CD4-positive, alpha-beta T cell (primary cell): ENCODE measurements at regions of chr4 and their contacts with region 1.

Region 1: DNA sequence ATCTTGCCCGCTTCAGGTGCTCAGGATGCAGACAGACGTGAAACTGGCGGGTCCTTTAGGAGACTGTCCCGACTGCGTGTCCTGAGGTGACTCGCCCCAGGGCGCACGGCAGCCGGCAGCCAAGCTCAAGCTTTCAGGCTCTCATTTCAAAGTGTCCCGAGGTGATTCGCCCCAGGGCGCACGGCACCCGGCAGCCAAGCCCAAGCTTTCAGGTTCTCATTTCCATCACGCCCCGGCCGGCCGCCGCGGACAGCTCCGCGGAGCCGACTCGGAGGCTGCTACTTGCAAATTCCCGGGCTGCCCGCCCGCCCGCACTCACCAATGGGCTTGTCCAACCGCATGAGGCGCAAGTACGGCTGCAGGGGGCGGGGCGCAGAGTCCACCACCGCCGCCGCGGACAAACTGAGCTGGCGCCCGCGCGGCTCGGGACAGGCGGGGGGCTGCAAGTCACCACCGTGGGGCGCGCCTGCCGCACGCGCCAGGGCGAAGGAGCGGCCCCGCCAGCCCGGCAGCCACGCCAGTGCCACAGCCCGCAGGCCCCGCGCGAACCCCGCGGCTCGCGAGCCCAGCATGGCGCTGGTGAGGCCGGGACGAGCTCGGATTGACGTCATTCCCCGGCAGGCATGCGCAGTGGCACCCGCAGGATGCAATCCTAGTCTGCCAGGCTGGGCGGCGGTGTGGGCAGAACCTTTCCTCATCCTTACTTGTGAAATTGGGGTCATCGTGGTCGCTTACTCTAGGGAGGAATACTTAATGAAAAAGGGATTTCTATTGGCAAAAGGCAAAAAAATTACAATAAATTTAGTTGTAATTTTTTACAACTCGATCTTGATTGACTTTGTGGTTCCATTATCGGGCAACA is at the start of gene COQ2:
- DNase-seq: peak; percentile 90 to 97 (median 94)
- ATAC-seq: peak; percentile 91
- H3K4me3 ChIP-seq: peak within 1 kb of the TSS; percentile 77
- H3K4me3 Mint-ChIP-seq: peak within 1 kb of the TSS; percentile 99
- H3K27ac ChIP-seq: peak within 1 kb of the TSS; percentile 72 to 83
- H3K27ac Mint-ChIP-seq: peak within 1 kb of the TSS; percentile 98
- H3K4me1 ChIP-seq: peaks cover 7% of the 10 kb centered on the region
- H3K4me1 Mint-ChIP-seq: peaks cover 41% of the 10 kb centered on the region
- H3K27me3 ChIP-seq: no peaks in the 10 kb centered on the region
- H3K27me3 Mint-ChIP-seq: no peaks in the 10 kb centered on the region
- CTCF ChIP-seq: no peak
- total RNA-seq, gene COQ2: 9.2 to 10.1 TPM

Region 2: DNA sequence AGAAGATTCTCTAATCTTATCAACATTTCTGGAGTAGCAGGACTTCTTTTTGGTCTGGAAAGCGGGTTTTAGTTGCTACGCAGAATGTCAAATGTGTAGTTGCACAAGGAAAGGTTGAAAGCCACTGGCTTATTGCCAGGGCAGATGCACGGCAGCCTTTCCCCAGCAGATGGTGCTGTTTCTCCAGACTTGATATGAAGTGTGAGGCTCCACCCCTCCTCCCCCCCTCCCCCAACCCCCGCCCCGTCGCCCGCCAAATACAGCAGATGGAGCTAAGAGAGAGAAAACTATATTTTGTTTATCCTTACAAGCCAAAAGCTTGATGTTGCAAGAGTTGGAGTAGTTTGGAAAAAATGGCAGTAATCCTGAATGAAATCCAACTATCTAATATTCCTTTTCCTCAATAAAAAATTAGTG is 822.0 kb before region 1 on chr4:
- CTCF ChIA-PET with region 1: no interaction called
- POLR2A ChIA-PET with region 1: no interaction called
- intact Hi-C with region 1: loop called in 1 of 2 experiments (anchors 5 kb)
- DNase-seq: peak; percentile 68 to 90 (median 80)
- ATAC-seq: peak; percentile 99
- H3K4me3 ChIP-seq: no peak overlapping the region
- H3K4me3 Mint-ChIP-seq: no peak overlapping the region
- H3K27ac ChIP-seq: no peak overlapping the region
- H3K27ac Mint-ChIP-seq: no peak overlapping the region
- H3K4me1 ChIP-seq: no peaks in the 10 kb centered on the region
- H3K4me1 Mint-ChIP-seq: peaks cover 6% of the 10 kb centered on the region
- H3K27me3 ChIP-seq: no peaks in the 10 kb centered on the region
- H3K27me3 Mint-ChIP-seq: no peaks in the 10 kb centered on the region
- CTCF ChIP-seq: peak; percentile 71

Region 3: DNA sequence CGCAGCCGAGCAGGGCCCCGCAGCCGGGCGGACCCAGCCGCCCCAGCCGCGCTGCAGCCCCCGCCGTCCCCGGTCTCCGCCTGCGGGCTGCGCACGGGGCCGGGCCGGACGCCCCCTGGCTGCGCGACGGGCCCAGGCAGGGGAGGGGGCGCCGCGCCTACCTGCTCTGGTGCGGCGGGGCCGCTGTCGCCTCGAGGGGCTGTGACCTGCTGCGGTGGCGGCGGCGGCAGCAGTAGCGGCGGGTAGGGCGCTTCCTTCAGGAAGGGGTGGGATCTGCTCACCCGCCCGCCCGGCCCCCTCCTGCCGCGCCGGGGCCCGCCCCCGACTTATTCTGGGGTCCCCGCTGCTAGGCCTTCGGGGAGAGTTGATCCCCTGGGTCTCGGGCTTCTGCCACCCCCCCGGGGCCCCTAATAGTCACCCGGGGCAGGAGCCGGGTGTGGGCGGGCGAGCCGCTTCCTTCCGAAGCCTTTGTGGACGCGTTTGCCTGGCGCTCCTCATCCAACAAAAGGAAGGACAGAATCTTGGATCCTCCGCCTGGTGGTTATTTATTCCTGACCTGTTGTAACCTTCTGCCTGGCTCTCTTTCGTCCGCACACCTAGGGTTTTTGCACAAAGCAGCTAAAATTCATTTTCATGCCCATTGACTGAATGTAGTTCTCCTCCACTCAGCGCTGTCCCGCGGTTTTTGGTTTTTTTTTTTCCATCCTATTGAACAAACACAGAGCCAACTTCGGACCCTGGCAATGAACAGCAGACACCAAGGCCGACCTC is 722.5 kb before region 1 on chr4 and contains the start of gene TMEM150C:
- CTCF ChIA-PET with region 1: no interaction called
- POLR2A ChIA-PET with region 1: no interaction called
- intact Hi-C with region 1: no loop called
- DNase-seq: peak in 1 of 14 experiments; percentile 2
- ATAC-seq: peak; percentile 26
- H3K4me3 ChIP-seq: no peak within 1 kb of the TSS
- H3K4me3 Mint-ChIP-seq: peak within 1 kb of the TSS; percentile 69
- H3K27ac ChIP-seq: no peak within 1 kb of the TSS
- H3K27ac Mint-ChIP-seq: no peak within 1 kb of the TSS
- H3K4me1 ChIP-seq: peaks cover 7% of the 10 kb centered on the region
- H3K4me1 Mint-ChIP-seq: peaks cover 13% of the 10 kb centered on the region
- H3K27me3 ChIP-seq: peaks cover 26 to 52% of the 10 kb centered on the region in 2 experiments
- H3K27me3 Mint-ChIP-seq: peaks cover 82% of the 10 kb centered on the region
- CTCF ChIP-seq: no peak
- total RNA-seq, gene TMEM150C: not detected

Region 4: GRCh38 chr4:82900331-82901128 is 383.9 kb before region 1 on chr4 and contains the start of gene THAP9:
- CTCF ChIA-PET with region 1: no interaction called
- POLR2A ChIA-PET with region 1: interaction called, 19 read pairs
- intact Hi-C with region 1: loop called (anchors 5 kb)
- DNase-seq: peak; percentile 94 to 100 (median 96)
- ATAC-seq: peak; percentile 86
- H3K4me3 ChIP-seq: peak within 1 kb of the TSS; percentile 72
- H3K4me3 Mint-ChIP-seq: no peak within 1 kb of the TSS
- H3K27ac ChIP-seq: peak within 1 kb of the TSS; percentile 94 to 99
- H3K27ac Mint-ChIP-seq: no peak within 1 kb of the TSS
- H3K4me1 ChIP-seq: peaks cover 11% of the 10 kb centered on the region
- H3K4me1 Mint-ChIP-seq: peaks cover 13% of the 10 kb centered on the region
- H3K27me3 ChIP-seq: no peaks in the 10 kb centered on the region
- H3K27me3 Mint-ChIP-seq: no peaks in the 10 kb centered on the region
- CTCF ChIP-seq: no peak
- total RNA-seq, gene THAP9: 3.8 to 4.3 TPM

Region 5: GRCh38 chr4:83034630-83035494 is 249.6 kb before region 1 on chr4 and contains the start of gene COPS4:
- CTCF ChIA-PET with region 1: no interaction called
- POLR2A ChIA-PET with region 1: interaction called, 33 read pairs
- intact Hi-C with region 1: no loop called
- DNase-seq: peak; percentile 86 to 100 (median 92)
- ATAC-seq: peak; percentile 95
- H3K4me3 ChIP-seq: peak within 1 kb of the TSS; percentile 83
- H3K4me3 Mint-ChIP-seq: peak within 1 kb of the TSS; percentile 99
- H3K27ac ChIP-seq: peak within 1 kb of the TSS; percentile 84
- H3K27ac Mint-ChIP-seq: peak within 1 kb of the TSS; percentile 90
- H3K4me1 ChIP-seq: peaks cover 28% of the 10 kb centered on the region
- H3K4me1 Mint-ChIP-seq: peaks cover 41% of the 10 kb centered on the region
- H3K27me3 ChIP-seq: no peaks in the 10 kb centered on the region
- H3K27me3 Mint-ChIP-seq: no peaks in the 10 kb centered on the region
- CTCF ChIP-seq: no peak
- total RNA-seq, gene COPS4: 26.0 to 27.6 TPM

Region 6: GRCh38 chr4:83083925-83084475 is 200.4 kb before region 1 on chr4:
- CTCF ChIA-PET with region 1: interaction called, 5 read pairs
- POLR2A ChIA-PET with region 1: interaction called, 15 read pairs
- intact Hi-C with region 1: no loop called
- DNase-seq: peak in 12 of 14 experiments; percentile 28 to 90 (median 66)
- ATAC-seq: peak; percentile 98
- H3K4me3 ChIP-seq: no peak overlapping the region
- H3K4me3 Mint-ChIP-seq: peak overlapping the region; percentile 60
- H3K27ac ChIP-seq: peak overlapping the region; percentile 22 to 69
- H3K27ac Mint-ChIP-seq: peak overlapping the region; percentile 99
- H3K4me1 ChIP-seq: peaks cover 28% of the 10 kb centered on the region
- H3K4me1 Mint-ChIP-seq: peaks cover 57% of the 10 kb centered on the region
- H3K27me3 ChIP-seq: no peaks in the 10 kb centered on the region
- H3K27me3 Mint-ChIP-seq: no peaks in the 10 kb centered on the region
- CTCF ChIP-seq: peak; percentile 53

Region 7: DNA sequence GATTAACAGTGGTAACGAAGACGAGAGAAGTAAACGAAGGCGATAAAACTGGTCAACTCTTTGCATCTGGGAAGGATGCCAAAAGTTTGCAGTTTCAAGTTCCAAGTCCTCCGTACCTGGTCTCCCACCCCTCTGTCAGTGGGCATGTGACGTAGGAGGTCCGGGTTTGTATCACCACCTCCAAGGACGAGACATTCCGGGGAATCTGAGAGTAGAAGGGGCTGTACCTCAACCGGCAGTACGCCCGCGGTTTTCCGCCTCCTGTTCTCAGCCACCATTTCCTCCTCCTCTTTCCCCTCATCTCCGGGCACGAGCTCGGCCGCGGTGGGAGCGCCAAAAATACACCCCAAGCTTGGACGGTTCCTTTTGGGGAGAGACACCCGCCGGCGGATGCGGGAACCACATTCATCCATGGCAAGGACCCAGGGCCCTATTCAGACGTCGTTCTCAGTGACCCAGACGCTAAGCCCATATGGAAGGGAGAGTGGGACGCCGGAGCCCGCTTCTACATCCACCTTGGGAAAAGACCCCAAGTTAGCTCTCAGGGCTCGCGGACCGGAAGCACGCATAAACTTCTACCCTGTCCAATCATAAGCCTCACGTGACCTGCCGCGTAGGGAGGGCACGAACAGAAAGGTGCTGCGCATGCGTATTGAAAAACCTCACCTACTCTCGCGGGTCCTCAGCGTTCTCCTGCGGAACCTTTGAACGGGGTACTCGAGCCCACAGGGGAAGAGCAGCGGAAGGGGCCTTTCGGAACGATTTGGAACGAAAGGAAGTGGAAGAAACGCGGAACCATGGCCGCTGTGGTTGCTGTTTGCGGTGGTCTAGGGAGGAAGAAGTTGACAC is 171.1 kb after region 1 on chr4 and contains the starts of genes HELQ and MRPS18C:
- CTCF ChIA-PET with region 1: no interaction called
- POLR2A ChIA-PET with region 1: interaction called, 19 read pairs
- intact Hi-C with region 1: loop called in 1 of 2 experiments (anchors 5 kb)
- DNase-seq: peak; percentile 85 to 99 (median 92)
- ATAC-seq: peak; percentile 86
- H3K4me3 ChIP-seq: peak within 1 kb of the TSS; percentile 88
- H3K4me3 Mint-ChIP-seq: peak within 1 kb of the TSS; percentile 99
- H3K27ac ChIP-seq: peak within 1 kb of the TSS; percentile 99 to 100
- H3K27ac Mint-ChIP-seq: peak within 1 kb of the TSS; percentile 100
- H3K4me1 ChIP-seq: peaks cover 12% of the 10 kb centered on the region
- H3K4me1 Mint-ChIP-seq: peaks cover 70% of the 10 kb centered on the region
- H3K27me3 ChIP-seq: no peaks in the 10 kb centered on the region
- H3K27me3 Mint-ChIP-seq: no peaks in the 10 kb centered on the region
- CTCF ChIP-seq: no peak
- total RNA-seq, gene HELQ: 21.5 to 24.1 TPM
- total RNA-seq, gene MRPS18C: 15.7 to 18.0 TPM

Region 8: DNA sequence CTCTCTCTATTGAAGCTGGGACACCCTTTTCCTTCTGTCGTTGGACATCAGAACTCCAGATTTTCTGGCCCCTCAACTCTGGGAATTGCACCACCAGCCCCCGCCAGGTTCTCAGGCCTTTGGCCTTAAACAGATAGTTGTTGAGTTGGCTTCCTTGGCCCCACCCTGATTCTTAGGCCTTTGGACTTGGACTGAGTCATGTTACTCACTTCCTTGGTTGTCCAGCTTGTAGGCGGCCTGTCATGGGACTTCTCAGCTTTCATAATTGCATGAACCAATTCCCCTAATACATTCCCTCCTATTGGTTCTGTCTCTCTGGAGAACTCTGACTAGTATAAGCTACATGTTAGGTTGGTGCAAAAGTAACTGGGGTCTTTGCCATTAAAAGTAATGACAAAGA is 447.2 kb after region 1 on chr4:
- CTCF ChIA-PET with region 1: no interaction called
- POLR2A ChIA-PET with region 1: no interaction called
- intact Hi-C with region 1: no loop called
- DNase-seq: peak in 1 of 14 experiments; percentile 5
- ATAC-seq: no peak
- H3K4me3 ChIP-seq: no peak overlapping the region
- H3K4me3 Mint-ChIP-seq: no peak overlapping the region
- H3K27ac ChIP-seq: no peak overlapping the region
- H3K27ac Mint-ChIP-seq: no peak overlapping the region
- H3K4me1 ChIP-seq: no peaks in the 10 kb centered on the region
- H3K4me1 Mint-ChIP-seq: no peaks in the 10 kb centered on the region
- H3K27me3 ChIP-seq: no peaks in the 10 kb centered on the region
- H3K27me3 Mint-ChIP-seq: peaks cover 27% of the 10 kb centered on the region
- CTCF ChIP-seq: no peak